Activated naive CD4-positive, alpha-beta T cell treated with anti-CD3 and anti-CD28 coated beads for 36 hours (primary cell): ENCODE measurements at regions of chr19 and their contacts with region 1.

Region 1: GRCh38 chr19:32580901-32581703 is at the start of gene PDCD5:
- DNase-seq: peak; percentile 97
- H3K4me3 Mint-ChIP-seq: peak within 1 kb of the TSS; percentile 89
- H3K27ac Mint-ChIP-seq: peak within 1 kb of the TSS; percentile 81
- H3K4me1 Mint-ChIP-seq: peaks cover 39% of the 10 kb centered on the region
- H3K27me3 Mint-ChIP-seq: no peaks in the 10 kb centered on the region
- total RNA-seq, gene PDCD5: 233 to 242 TPM

Region 2: DNA sequence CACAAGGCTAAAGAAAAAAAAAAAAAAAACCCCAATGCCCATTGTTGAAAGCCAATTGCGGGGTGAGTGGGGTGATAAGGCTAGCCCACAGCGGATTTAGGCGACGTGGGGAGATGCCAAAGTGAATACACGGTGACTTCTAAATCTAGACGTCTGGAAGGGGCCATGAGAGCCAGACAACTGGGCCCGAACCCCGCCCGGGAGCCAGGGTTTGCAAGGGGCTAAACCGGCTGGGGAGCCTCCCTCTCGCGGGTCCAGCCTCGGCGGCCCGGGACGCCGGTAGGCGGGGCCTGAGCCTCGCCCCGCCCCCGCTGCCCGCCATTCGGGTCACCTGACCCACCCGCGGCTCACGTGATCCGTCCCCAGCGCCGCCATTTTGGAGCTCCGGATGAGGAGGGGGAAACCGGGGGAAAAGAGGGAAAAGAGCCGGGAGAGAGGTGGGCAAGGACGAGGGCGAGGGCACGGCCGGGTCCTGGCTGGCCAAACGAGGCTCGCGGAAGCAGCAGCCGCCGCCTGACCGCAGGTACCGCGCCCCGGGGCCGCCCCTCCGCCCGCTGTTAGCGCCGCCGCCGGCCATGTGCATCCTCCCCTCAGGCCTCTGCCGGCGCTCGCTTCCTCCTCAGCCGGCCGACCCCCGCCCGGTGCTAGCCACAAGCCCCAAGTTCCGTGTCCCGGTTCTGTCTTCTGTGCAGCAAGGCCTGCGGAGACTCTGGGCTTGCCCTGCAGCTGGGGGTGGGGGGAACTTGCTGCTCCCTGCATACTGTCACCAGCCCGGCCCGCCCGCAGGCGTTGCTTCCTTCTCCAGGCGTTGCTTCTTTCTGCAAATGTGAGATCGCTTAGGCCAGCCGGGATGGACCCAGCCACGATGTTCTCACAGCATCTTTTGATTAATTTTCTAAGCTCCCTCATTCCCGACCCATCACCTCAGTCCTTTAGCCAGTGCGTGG is 235.6 kb before region 1 on chr19 and contains the start of gene ZNF507:
- CTCF ChIA-PET with region 1: no interaction called
- intact Hi-C with region 1: loop called (anchors 2 kb)
- DNase-seq: peak; percentile 90
- H3K4me3 Mint-ChIP-seq: peak within 1 kb of the TSS; percentile 96
- H3K27ac Mint-ChIP-seq: peak within 1 kb of the TSS; percentile 89
- H3K4me1 Mint-ChIP-seq: peaks cover 34% of the 10 kb centered on the region
- H3K27me3 Mint-ChIP-seq: no peaks in the 10 kb centered on the region
- total RNA-seq, gene ZNF507: 21.4 to 21.5 TPM

Region 3: GRCh38 chr19:32570081-32570785 is 10.9 kb before region 1 on chr19:
- CTCF ChIA-PET with region 1: no interaction called
- intact Hi-C with region 1: loop called (anchors 1 kb)
- DNase-seq: peak; percentile 76
- H3K4me3 Mint-ChIP-seq: no peak overlapping the region
- H3K27ac Mint-ChIP-seq: no peak overlapping the region
- H3K4me1 Mint-ChIP-seq: peaks cover 16% of the 10 kb centered on the region
- H3K27me3 Mint-ChIP-seq: peaks cover 14% of the 10 kb centered on the region

Region 4: GRCh38 chr19:32735936-32736335 is 154.8 kb after region 1 on chr19:
- CTCF ChIA-PET with region 1: no interaction called
- intact Hi-C with region 1: no loop called
- DNase-seq: no peak
- H3K4me3 Mint-ChIP-seq: no peak overlapping the region
- H3K27ac Mint-ChIP-seq: no peak overlapping the region
- H3K4me1 Mint-ChIP-seq: no peaks in the 10 kb centered on the region
- H3K27me3 Mint-ChIP-seq: peaks cover 17% of the 10 kb centered on the region

Region 5: DNA sequence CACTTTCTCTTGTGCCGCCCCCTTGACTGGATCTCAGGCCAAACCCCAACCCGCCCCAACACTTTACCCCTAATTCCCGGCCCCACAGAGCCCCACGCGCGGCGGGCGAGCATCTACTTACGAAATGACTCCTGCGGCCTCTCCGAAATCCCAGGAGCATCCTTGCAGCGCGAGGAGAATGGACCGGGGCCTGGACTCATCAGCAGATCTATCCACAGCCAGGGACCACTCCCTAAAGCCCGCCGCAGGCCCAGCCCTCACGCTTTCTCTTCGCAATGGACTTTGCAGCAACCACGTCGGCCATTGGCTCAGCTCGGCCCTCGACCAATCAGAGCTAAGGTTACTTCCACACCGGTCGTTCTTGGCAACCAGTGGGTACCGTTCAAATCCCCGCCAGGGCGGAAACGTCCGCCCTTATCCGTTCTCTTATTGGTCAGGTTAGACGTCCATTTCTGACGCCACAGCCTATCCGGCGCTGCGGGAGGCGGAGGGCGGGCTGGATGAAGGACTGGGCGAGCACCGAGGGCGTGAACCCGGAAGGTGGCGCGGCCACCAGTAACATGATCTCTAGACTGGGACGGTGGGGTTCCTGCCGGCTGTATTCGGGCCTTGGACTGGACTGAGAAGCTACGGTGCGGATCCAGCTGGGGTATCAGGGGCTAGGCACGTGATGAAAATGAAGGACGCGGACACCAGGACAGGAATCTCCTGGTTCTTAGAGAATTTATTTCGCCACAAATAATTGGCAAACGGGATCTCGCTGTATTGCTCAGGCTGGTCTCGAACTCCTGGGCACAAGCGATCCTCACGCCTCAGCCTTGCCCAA is 390.8 kb after region 1 on chr19 and contains the starts of genes CEP89 and FAAP24:
- CTCF ChIA-PET with region 1: no interaction called
- intact Hi-C with region 1: loop called (anchors 1 kb)
- DNase-seq: peak; percentile 99
- H3K4me3 Mint-ChIP-seq: peak within 1 kb of the TSS; percentile 97
- H3K27ac Mint-ChIP-seq: peak within 1 kb of the TSS; percentile 90
- H3K4me1 Mint-ChIP-seq: peaks cover 9% of the 10 kb centered on the region
- H3K27me3 Mint-ChIP-seq: no peaks in the 10 kb centered on the region
- total RNA-seq, gene CEP89: 14.6 to 15.5 TPM
- total RNA-seq, gene FAAP24: 9.6 to 10.5 TPM

Region 6: DNA sequence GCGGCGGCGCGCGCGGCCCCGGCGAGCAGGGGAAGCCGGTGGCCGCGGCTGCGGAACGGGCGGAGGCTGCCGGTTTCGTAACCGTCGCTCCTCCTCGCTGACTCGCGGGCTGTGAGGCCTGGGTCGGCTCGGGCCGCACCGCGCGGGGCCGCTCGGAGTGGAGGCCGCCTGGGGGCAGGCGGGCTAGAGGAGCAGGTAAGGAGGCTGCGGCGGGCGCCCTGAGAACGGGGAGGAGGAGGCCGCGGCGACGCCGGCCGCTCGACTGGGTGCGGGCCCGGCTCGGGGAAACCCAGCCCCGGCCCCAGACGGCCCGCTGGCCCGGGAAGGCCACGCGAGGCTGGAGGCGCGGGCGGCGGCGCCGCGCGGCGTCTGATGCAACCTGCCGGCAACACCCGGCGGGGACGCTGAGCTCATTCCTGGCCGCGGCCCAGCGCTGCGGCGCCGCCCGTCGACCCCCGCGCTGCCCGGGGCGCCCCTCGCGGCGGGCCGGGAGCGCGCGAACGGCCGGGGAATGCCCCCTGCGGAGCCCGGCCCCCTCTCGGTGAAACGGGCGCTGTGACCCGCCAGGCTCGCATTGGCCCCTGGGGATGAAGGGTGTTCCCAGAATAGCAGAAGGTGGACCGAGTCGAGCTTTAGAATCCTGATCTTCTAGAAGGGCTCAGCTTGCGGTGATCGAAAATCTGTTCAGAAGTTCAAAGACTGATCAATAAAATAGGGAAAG is 792.8 kb after region 1 on chr19 and contains the start of gene CEBPG:
- CTCF ChIA-PET with region 1: no interaction called
- intact Hi-C with region 1: loop called (anchors 5 kb)
- DNase-seq: peak; percentile 67
- H3K4me3 Mint-ChIP-seq: peak within 1 kb of the TSS; percentile 88
- H3K27ac Mint-ChIP-seq: peak within 1 kb of the TSS; percentile 83
- H3K4me1 Mint-ChIP-seq: peaks cover 51% of the 10 kb centered on the region
- H3K27me3 Mint-ChIP-seq: no peaks in the 10 kb centered on the region
- total RNA-seq, gene CEBPG: 37.3 to 38.7 TPM